Breast epithelium (tissue), 4 donors: ENCODE measurements at regions of chr12 and their contacts with region 1.

Region 1: GRCh38 chr12:112341046-112341825 is 41.0 kb downstream of the HECTD4 start:
- DNase-seq: no peak
- H3K4me3 ChIP-seq: no peak overlapping the region
- H3K27ac ChIP-seq: no peak overlapping the region
- H3K4me1 ChIP-seq: no peaks in the 10 kb centered on the region
- H3K27me3 ChIP-seq: no peaks in the 10 kb centered on the region
- CTCF ChIP-seq: no peak
- POLR2A ChIP-seq: no peak

Region 2: GRCh38 chr12:112375105-112375504 is 33.9 kb after region 1 on chr12:
- intact Hi-C with region 1: loop called (anchors 5 kb)
- DNase-seq: no peak
- H3K4me3 ChIP-seq: no peak overlapping the region
- H3K27ac ChIP-seq: no peak overlapping the region
- H3K4me1 ChIP-seq: no peaks in the 10 kb centered on the region
- H3K27me3 ChIP-seq: no peaks in the 10 kb centered on the region
- CTCF ChIP-seq: no peak
- POLR2A ChIP-seq: no peak